HepG2 (cell line): ENCODE measurements at regions of chr2 and their contacts with region 1.

Region 1: DNA sequence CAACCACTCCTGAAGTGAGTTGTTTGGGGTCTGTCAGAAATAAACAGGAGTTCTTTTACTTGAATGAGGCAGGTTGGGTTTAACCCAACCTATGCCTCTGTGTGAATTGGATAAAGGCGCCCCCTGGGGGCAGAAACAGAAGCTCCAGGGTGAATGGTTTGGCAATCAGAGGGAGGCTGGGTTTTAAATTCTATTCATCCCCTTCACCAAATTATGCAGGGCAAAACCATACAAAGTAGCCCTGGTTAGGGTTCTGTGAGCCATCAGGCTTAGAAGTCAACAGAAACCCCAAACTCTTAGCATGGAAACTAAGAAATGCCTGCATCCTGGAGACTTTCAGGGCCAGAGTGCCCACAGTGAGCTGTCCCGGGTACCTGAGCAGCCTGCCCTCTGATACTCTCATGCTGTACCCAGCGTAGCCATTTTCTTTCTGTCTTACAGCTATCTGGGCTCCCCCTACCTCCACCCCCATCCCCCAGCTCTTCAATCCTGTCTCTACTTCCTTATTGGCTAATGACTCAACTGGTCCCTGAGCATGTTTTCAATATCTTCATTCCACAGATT is 241.5 kb downstream of the ICOS start:
- DNase-seq: peak; percentile 35
- ATAC-seq: peak; percentile 91
- H3K4me3 ChIP-seq: no peak overlapping the region
- H3K27ac ChIP-seq: no peak overlapping the region
- H3K4me1 ChIP-seq: peaks cover 10% of the 10 kb centered on the region; the same call in 1 of the 2 replicates
- H3K27me3 ChIP-seq: no peaks in the 10 kb centered on the region; a peak in 1 of 5 replicates
- CTCF ChIP-seq: peak; percentile 42; the same call in 1 of the 2 replicates
- EP300 ChIP-seq: no peak
- POLR2A ChIP-seq: no peak
- RAD21 ChIP-seq: no peak

Region 2: DNA sequence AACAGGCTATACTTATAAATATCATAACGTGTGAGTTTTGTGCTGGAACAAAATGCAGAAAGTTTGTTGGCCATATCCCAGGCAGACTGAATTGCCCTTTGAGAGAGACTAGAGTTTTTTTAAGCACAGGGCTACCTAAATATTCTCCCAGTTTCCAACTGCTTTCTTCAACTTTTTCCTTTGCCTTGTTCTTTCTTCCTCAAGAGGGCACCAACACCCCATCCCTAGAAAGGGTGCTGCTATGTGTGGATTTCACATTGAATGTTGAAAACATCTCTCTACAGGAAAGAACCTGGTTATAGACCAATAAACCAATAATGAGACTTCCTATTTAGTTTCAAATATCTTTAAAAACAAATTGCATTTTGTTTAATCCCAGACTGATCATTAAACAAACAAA is 153.6 kb before region 1 on chr2:
- CTCF ChIA-PET with region 1: no interaction called
- POLR2A ChIA-PET with region 1: no interaction called
- in situ Hi-C with region 1: no loop called
- intact Hi-C with region 1: loop called (anchors 1 kb)
- DNase-seq: peak; percentile 33
- ATAC-seq: peak; percentile 53; the same call in 2 of the 3 replicates
- H3K4me3 ChIP-seq: no peak overlapping the region
- H3K27ac ChIP-seq: no peak overlapping the region
- H3K4me1 ChIP-seq: no peaks in the 10 kb centered on the region
- H3K27me3 ChIP-seq: no peaks in the 10 kb centered on the region
- CTCF ChIP-seq: peak; percentile 57
- EP300 ChIP-seq: no peak
- POLR2A ChIP-seq: no peak
- RAD21 ChIP-seq: no peak

Region 3: DNA sequence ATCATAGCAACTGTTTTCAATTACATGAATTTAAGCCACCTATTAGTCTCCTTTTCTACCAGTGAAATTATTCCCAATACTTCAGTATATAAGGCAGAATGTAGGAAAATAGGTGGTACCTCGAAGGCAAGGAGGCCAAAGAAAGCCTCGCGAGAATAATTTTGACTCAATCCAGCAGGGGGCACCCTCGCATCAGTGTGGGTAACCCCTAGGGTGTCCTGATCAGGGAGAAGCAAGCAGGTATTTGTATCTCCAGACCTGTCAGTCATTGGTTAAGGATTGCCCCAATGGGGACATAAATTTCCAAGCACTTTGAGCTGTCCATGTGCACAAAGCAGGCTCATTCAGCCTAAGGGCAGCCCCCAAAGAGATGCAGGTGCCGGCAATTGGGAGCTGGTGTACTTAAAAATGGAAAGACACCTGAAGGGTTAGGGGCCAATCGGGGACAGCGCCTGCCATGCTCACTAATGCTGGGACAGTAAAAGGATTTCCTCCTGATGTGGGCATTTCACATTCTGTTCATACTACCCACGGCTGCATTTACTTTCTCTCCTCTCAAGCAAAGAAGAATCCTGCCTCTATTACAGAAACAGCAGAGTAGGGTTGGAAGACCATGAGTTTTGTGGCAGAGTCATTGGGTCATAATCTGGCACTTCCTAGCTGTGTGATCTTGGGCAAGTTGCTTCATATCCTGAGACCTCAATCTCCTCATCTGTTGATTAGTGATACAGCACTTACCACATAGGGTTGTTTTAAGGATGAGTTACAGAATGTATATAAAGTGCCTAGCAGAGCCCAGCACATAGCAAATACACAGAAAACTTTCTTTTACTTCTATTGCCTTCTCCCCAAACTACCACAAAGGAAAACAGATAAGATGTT is 105.4 kb before region 1 on chr2:
- CTCF ChIA-PET with region 1: no interaction called
- POLR2A ChIA-PET with region 1: no interaction called
- in situ Hi-C with region 1: no loop called
- intact Hi-C with region 1: loop called (anchors 1 kb)
- DNase-seq: peak; percentile 11
- ATAC-seq: peak; percentile 79
- H3K4me3 ChIP-seq: no peak overlapping the region
- H3K27ac ChIP-seq: no peak overlapping the region
- H3K4me1 ChIP-seq: no peaks in the 10 kb centered on the region
- H3K27me3 ChIP-seq: no peaks in the 10 kb centered on the region; a peak in 1 of 5 replicates
- CTCF ChIP-seq: peak; percentile 63
- EP300 ChIP-seq: no peak
- POLR2A ChIP-seq: no peak
- RAD21 ChIP-seq: no peak

Region 4: GRCh38 chr2:204108330-204108751 is 69.7 kb before region 1 on chr2:
- CTCF ChIA-PET with region 1: interaction called, 3 read pairs
- POLR2A ChIA-PET with region 1: no interaction called
- in situ Hi-C with region 1: no loop called
- intact Hi-C with region 1: loop called (anchors 1 kb)
- DNase-seq: peak; percentile 11
- ATAC-seq: peak; percentile 85
- H3K4me3 ChIP-seq: no peak overlapping the region
- H3K27ac ChIP-seq: no peak overlapping the region
- H3K4me1 ChIP-seq: no peaks in the 10 kb centered on the region
- H3K27me3 ChIP-seq: peaks cover 0 to 12% of the 10 kb centered on the region in 2 experiments; a peak in 2 of 5 replicates
- CTCF ChIP-seq: peak; percentile 52
- EP300 ChIP-seq: no peak
- POLR2A ChIP-seq: no peak
- RAD21 ChIP-seq: no peak

Region 5: GRCh38 chr2:204145263-204145751 is 32.8 kb before region 1 on chr2:
- CTCF ChIA-PET with region 1: interaction called, 20 read pairs
- POLR2A ChIA-PET with region 1: no interaction called
- in situ Hi-C with region 1: no loop called
- intact Hi-C with region 1: loop called (anchors 1 kb)
- DNase-seq: peak; percentile 65
- ATAC-seq: peak; percentile 100
- H3K4me3 ChIP-seq: no peak overlapping the region; a peak in 1 of 6 replicates
- H3K27ac ChIP-seq: no peak overlapping the region
- H3K4me1 ChIP-seq: no peaks in the 10 kb centered on the region
- H3K27me3 ChIP-seq: peaks cover 0 to 4% of the 10 kb centered on the region in 2 experiments; a peak in 2 of 5 replicates
- CTCF ChIP-seq: peak; percentile 96
- EP300 ChIP-seq: no peak
- POLR2A ChIP-seq: no peak
- RAD21 ChIP-seq: peak; percentile 80

Region 6: GRCh38 chr2:204313256-204313655 is 135.2 kb after region 1 on chr2:
- CTCF ChIA-PET with region 1: no interaction called
- POLR2A ChIA-PET with region 1: no interaction called
- in situ Hi-C with region 1: no loop called
- intact Hi-C with region 1: no loop called
- DNase-seq: no peak
- ATAC-seq: no peak
- H3K4me3 ChIP-seq: no peak overlapping the region
- H3K27ac ChIP-seq: no peak overlapping the region
- H3K4me1 ChIP-seq: no peaks in the 10 kb centered on the region
- H3K27me3 ChIP-seq: no peaks in the 10 kb centered on the region; a peak in 1 of 5 replicates
- CTCF ChIP-seq: no peak
- EP300 ChIP-seq: no peak
- POLR2A ChIP-seq: no peak
- RAD21 ChIP-seq: no peak